ENCODE measurements at regions of chr20 and their contacts with region 1.

Region 1: DNA sequence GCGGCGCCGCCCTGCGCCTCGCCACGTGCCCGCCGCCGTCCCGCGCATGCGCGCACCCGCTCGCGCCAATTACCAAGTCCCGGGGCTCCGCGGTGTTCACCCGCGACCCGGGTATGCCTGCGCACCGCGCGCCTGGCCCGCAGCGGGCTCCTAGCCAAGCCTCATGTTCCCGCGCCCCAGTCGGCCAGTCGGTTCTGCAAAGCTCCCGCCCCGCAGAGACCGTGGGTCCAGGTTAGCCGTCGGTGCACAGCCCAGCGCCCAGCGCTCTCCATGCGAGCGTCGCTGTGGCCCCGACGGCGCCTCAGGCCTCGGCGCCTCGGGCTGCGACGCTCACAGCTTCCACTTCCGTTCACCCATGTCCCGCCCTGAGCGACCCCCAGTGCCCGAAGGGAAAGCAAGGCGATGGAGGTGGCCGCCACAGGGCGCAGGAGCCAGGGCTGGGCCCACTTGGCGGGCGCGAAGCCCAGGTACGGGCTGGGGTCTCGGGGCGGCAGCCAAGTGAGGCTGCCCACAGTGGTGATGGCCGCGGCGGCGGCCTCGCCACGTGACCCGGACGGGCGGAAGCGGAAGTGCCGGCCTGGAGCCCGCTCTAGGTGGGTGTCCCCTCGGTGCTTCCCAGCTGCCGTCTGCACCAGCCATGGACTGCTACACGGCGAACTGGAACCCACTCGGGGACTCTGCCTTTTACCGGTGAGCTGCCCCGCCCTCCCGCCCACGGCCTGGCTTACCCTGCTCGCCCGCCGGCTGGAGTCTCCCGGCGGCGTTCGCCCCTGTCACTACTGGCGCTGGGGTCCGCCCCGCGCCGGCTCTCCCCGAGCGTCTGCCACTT is at the starts of genes PCED1A and VPS16:
- DNase-seq: peak; percentile 87 to 90 (median 89)
- H3K4me3 ChIP-seq: peak within 1 kb of the TSS; percentile 77 to 80
- H3K4me3 Mint-ChIP-seq: peak within 1 kb of the TSS; percentile 85 to 91 (median 89)
- H3K27ac ChIP-seq: peak within 1 kb of the TSS; percentile 86
- H3K27ac Mint-ChIP-seq: peak within 1 kb of the TSS; percentile 85 to 95 (median 93)
- H3K4me1 ChIP-seq: peaks cover 24% of the 10 kb centered on the region
- H3K4me1 Mint-ChIP-seq: peaks cover 22 to 35% (median 31%) of the 10 kb centered on the region in 4 donors
- H3K27me3 ChIP-seq: no peaks in the 10 kb centered on the region
- H3K27me3 Mint-ChIP-seq: no peaks in the 10 kb centered on the region
- total RNA-seq, gene PCED1A: 82.8 to 83.1 TPM
- total RNA-seq, gene VPS16: 57.2 to 61.1 TPM

Region 2: GRCh38 chr20:2508631-2509467 is 331.5 kb before region 1 on chr20 and contains the start of gene ZNF343:
- CTCF ChIA-PET with region 1: no interaction called
- POLR2A ChIA-PET with region 1: no interaction called
- intact Hi-C with region 1: loop called (anchors 2 kb)
- DNase-seq: peak; percentile 81 to 84 (median 83)
- H3K4me3 ChIP-seq: peak within 1 kb of the TSS; percentile 89 to 96
- H3K4me3 Mint-ChIP-seq: peak within 1 kb of the TSS; percentile 98 to 100 (median 100)
- H3K27ac ChIP-seq: peak within 1 kb of the TSS; percentile 62
- H3K27ac Mint-ChIP-seq: peak within 1 kb of the TSS; percentile 92 to 99 (median 96)
- H3K4me1 ChIP-seq: peaks cover 15% of the 10 kb centered on the region
- H3K4me1 Mint-ChIP-seq: peaks cover 10 to 22% (median 16%) of the 10 kb centered on the region in 4 donors
- H3K27me3 ChIP-seq: peaks cover 6% of the 10 kb centered on the region
- H3K27me3 Mint-ChIP-seq: peaks cover 8 to 14% of the 10 kb centered on the region in 2 donors
- total RNA-seq, gene ZNF343: 11.8 to 12.0 TPM

Region 3: GRCh38 chr20:2663887-2664719 is 176.2 kb before region 1 on chr20 and contains the start of gene IDH3B:
- CTCF ChIA-PET with region 1: no interaction called
- POLR2A ChIA-PET with region 1: interaction called, 11 read pairs
- intact Hi-C with region 1: loop called (anchors 5 kb)
- DNase-seq: peak; percentile 90 to 95 (median 91)
- H3K4me3 ChIP-seq: peak within 1 kb of the TSS; percentile 57 to 93
- H3K4me3 Mint-ChIP-seq: peak within 1 kb of the TSS; percentile 87 to 98 (median 94)
- H3K27ac ChIP-seq: peak within 1 kb of the TSS; percentile 83
- H3K27ac Mint-ChIP-seq: peak within 1 kb of the TSS; percentile 91 to 100 (median 98)
- H3K4me1 ChIP-seq: peaks cover 13% of the 10 kb centered on the region
- H3K4me1 Mint-ChIP-seq: peaks cover 17 to 32% (median 25%) of the 10 kb centered on the region in 4 donors
- H3K27me3 ChIP-seq: no peaks in the 10 kb centered on the region
- H3K27me3 Mint-ChIP-seq: no peaks in the 10 kb centered on the region
- total RNA-seq, gene IDH3B: 93.3 to 96.5 TPM

Region 4: GRCh38 chr20:2752567-2753460 is 87.5 kb before region 1 on chr20:
- CTCF ChIA-PET with region 1: interaction called, 4 read pairs
- POLR2A ChIA-PET with region 1: interaction called, 5 read pairs
- intact Hi-C with region 1: loop called (anchors 5 kb)
- DNase-seq: peak in 4 of 5 donors; percentile 48 to 55 (median 52)
- H3K4me3 ChIP-seq: peak overlapping the region; percentile 28 to 33
- H3K4me3 Mint-ChIP-seq: peak overlapping the region; percentile 81 to 89 (median 86)
- H3K27ac ChIP-seq: no peak overlapping the region
- H3K27ac Mint-ChIP-seq: peak overlapping the region; percentile 57 to 90 (median 74)
- H3K4me1 ChIP-seq: peaks cover 27% of the 10 kb centered on the region
- H3K4me1 Mint-ChIP-seq: peaks cover 16 to 40% (median 28%) of the 10 kb centered on the region in 4 donors
- H3K27me3 ChIP-seq: peaks cover 5% of the 10 kb centered on the region
- H3K27me3 Mint-ChIP-seq: peaks cover 2 to 9% of the 10 kb centered on the region in 2 donors

Region 5: GRCh38 chr20:2873010-2873746 is 32.8 kb after region 1 on chr20 and contains the start of gene PTPRA:
- CTCF ChIA-PET with region 1: interaction called, 3 read pairs
- POLR2A ChIA-PET with region 1: interaction called, 34 read pairs
- intact Hi-C with region 1: loop called (anchors 1 kb)
- DNase-seq: peak; percentile 87 to 91 (median 88)
- H3K4me3 ChIP-seq: peak within 1 kb of the TSS; percentile 84 to 95
- H3K4me3 Mint-ChIP-seq: peak within 1 kb of the TSS; percentile 88 to 96 (median 93)
- H3K27ac ChIP-seq: peak within 1 kb of the TSS; percentile 66
- H3K27ac Mint-ChIP-seq: peak within 1 kb of the TSS; percentile 86 to 95 (median 92)
- H3K4me1 ChIP-seq: peaks cover 25% of the 10 kb centered on the region
- H3K4me1 Mint-ChIP-seq: peaks cover 27 to 53% (median 40%) of the 10 kb centered on the region in 4 donors
- H3K27me3 ChIP-seq: no peaks in the 10 kb centered on the region
- H3K27me3 Mint-ChIP-seq: no peaks in the 10 kb centered on the region
- total RNA-seq, gene PTPRA: 86.6 to 87.8 TPM

Measured in CD4-positive, alpha-beta memory T cell (primary cell).